Posterior vena cava (tissue), 2 donors: ENCODE measurements at regions of chr7 and their contacts with region 1.

Region 1: GRCh38 chr7:4500812-4501211 is 181.3 kb upstream of the FOXK1 start:
- DNase-seq: peak; percentile 18

Region 2: GRCh38 chr7:3378390-3379150 is 1122.2 kb before region 1 on chr7:
- intact Hi-C with region 1: loop called in 1 of 2 experiments (anchors 5 kb)
- DNase-seq: no peak

Region 3: GRCh38 chr7:3636131-3636860 is 864.5 kb before region 1 on chr7:
- intact Hi-C with region 1: no loop called
- DNase-seq: no peak